Heart right ventricle (tissue), 16 donors: ENCODE measurements at regions of chr1 and their contacts with region 1.

Region 1: DNA sequence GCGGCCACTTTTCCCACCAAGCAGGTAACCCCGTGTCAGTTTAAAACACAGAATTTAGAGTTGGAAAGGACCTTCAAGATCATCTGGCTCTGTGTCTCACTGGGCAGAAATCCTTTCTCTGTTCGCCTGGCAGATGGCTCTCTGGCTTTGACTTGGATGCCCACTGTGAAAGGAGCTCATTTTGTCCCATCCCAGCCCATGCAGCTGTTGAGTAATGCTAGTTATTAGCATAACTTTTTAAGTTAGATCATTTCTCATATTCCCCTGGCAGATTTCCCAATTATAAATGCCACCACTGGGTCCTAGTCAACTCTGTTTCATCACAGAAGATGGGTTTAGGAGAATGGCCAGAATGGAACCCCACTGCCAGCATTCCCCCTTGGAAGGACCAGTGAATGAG is 55.9 kb downstream of the SLC35F3 start:
- DNase-seq: no peak
- ATAC-seq: no peak
- H3K4me3 ChIP-seq: no peak overlapping the region
- H3K27ac ChIP-seq: no peak overlapping the region
- H3K4me1 ChIP-seq: no peaks in the 10 kb centered on the region
- H3K27me3 ChIP-seq: peaks cover 0 to 9% (median 0%) of the 10 kb centered on the region in 7 donors
- CTCF ChIP-seq: no peak

Region 2: GRCh38 chr1:233993651-233994050 is 33.3 kb after region 1 on chr1:
- intact Hi-C with region 1: no loop called
- DNase-seq: no peak
- ATAC-seq: no peak
- H3K4me3 ChIP-seq: no peak overlapping the region
- H3K27ac ChIP-seq: no peak overlapping the region
- H3K4me1 ChIP-seq: no peaks in the 10 kb centered on the region
- H3K27me3 ChIP-seq: peaks cover 0 to 34% (median 7%) of the 10 kb centered on the region in 7 donors
- CTCF ChIP-seq: no peak

Region 3: DNA sequence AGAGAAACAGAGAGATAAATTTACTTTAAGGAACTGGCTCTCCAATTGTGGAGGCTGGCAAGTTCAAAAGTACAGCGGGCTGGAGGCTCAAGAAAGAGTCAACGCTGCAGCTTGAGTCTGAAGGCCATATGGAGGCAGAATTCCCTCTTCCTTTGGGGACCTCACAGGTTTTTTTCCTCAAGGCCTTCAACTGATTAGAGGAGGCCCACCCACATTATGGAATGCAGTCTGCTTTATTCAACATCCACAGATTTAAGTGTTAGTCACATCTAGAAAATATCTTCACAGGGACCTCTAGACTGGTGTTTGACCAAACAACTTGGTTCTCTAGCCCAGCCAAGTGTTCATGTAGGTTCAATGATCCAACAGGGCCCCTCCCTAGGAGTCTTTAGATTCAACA is 61.9 kb after region 1 on chr1:
- intact Hi-C with region 1: loop called in 1 of 10 experiments (anchors 10 kb)
- DNase-seq: no peak
- ATAC-seq: no peak
- H3K4me3 ChIP-seq: no peak overlapping the region
- H3K27ac ChIP-seq: no peak overlapping the region
- H3K4me1 ChIP-seq: no peaks in the 10 kb centered on the region
- H3K27me3 ChIP-seq: no peaks in the 10 kb centered on the region
- CTCF ChIP-seq: no peak